Activated CD4-positive, alpha-beta memory T cell treated with anti-CD3 and anti-CD28 coated beads, Interleukin-2, amount 10 ng/mL, durations not matched to agents 7 days and 5 days (primary cell): ENCODE measurements at regions of chr22 and their contacts with region 1.

Region 1: GRCh38 chr22:31272522-31273446 is 19.5 kb downstream of the PIK3IP1 start:
- DNase-seq: peak; percentile 51
- H3K4me3 Mint-ChIP-seq: no peak overlapping the region
- H3K27ac Mint-ChIP-seq: no peak overlapping the region
- H3K4me1 Mint-ChIP-seq: peaks cover 5% of the 10 kb centered on the region
- H3K27me3 Mint-ChIP-seq: no peaks in the 10 kb centered on the region

Region 2: GRCh38 chr22:31005535-31005934 is 267.2 kb before region 1 on chr22:
- CTCF ChIA-PET with region 1: no interaction called
- POLR2A ChIA-PET with region 1: no interaction called
- DNase-seq: no peak
- H3K4me3 Mint-ChIP-seq: no peak overlapping the region
- H3K27ac Mint-ChIP-seq: no peak overlapping the region
- H3K4me1 Mint-ChIP-seq: no peaks in the 10 kb centered on the region
- H3K27me3 Mint-ChIP-seq: peaks cover 6% of the 10 kb centered on the region

Region 3: GRCh38 chr22:31107178-31107893 is 165.4 kb before region 1 on chr22 and contains the start of gene SELENOM:
- CTCF ChIA-PET with region 1: interaction called, 21 read pairs
- POLR2A ChIA-PET with region 1: no interaction called
- DNase-seq: peak; percentile 91
- H3K4me3 Mint-ChIP-seq: peak within 1 kb of the TSS; percentile 79
- H3K27ac Mint-ChIP-seq: peak within 1 kb of the TSS; percentile 1
- H3K4me1 Mint-ChIP-seq: peaks cover 15% of the 10 kb centered on the region
- H3K27me3 Mint-ChIP-seq: no peaks in the 10 kb centered on the region
- total RNA-seq, gene SELENOM: 2.3 to 2.4 TPM

Region 4: GRCh38 chr22:31160328-31160978 is 112.3 kb before region 1 on chr22:
- CTCF ChIA-PET with region 1: interaction called, 10 read pairs
- POLR2A ChIA-PET with region 1: no interaction called
- DNase-seq: peak; percentile 26
- H3K4me3 Mint-ChIP-seq: peak overlapping the region; percentile 100
- H3K27ac Mint-ChIP-seq: peak overlapping the region; percentile 96
- H3K4me1 Mint-ChIP-seq: peaks cover 34% of the 10 kb centered on the region
- H3K27me3 Mint-ChIP-seq: peaks cover 2% of the 10 kb centered on the region

Region 5: GRCh38 chr22:31295831-31296657 is 23.3 kb after region 1 on chr22:
- CTCF ChIA-PET with region 1: interaction called, 59 read pairs
- POLR2A ChIA-PET with region 1: interaction called, 138 read pairs
- DNase-seq: no peak
- H3K4me3 Mint-ChIP-seq: no peak overlapping the region
- H3K27ac Mint-ChIP-seq: peak overlapping the region; percentile 4
- H3K4me1 Mint-ChIP-seq: peaks cover 39% of the 10 kb centered on the region
- H3K27me3 Mint-ChIP-seq: no peaks in the 10 kb centered on the region

Region 6: GRCh38 chr22:31449506-31449905 is 176.7 kb after region 1 on chr22:
- CTCF ChIA-PET with region 1: no interaction called
- POLR2A ChIA-PET with region 1: no interaction called
- DNase-seq: no peak
- H3K4me3 Mint-ChIP-seq: no peak overlapping the region
- H3K27ac Mint-ChIP-seq: no peak overlapping the region
- H3K4me1 Mint-ChIP-seq: peaks cover 11% of the 10 kb centered on the region
- H3K27me3 Mint-ChIP-seq: no peaks in the 10 kb centered on the region